PC-3 (cell line): ENCODE measurements at regions of chr1 and their contacts with region 1.

Region 1: DNA sequence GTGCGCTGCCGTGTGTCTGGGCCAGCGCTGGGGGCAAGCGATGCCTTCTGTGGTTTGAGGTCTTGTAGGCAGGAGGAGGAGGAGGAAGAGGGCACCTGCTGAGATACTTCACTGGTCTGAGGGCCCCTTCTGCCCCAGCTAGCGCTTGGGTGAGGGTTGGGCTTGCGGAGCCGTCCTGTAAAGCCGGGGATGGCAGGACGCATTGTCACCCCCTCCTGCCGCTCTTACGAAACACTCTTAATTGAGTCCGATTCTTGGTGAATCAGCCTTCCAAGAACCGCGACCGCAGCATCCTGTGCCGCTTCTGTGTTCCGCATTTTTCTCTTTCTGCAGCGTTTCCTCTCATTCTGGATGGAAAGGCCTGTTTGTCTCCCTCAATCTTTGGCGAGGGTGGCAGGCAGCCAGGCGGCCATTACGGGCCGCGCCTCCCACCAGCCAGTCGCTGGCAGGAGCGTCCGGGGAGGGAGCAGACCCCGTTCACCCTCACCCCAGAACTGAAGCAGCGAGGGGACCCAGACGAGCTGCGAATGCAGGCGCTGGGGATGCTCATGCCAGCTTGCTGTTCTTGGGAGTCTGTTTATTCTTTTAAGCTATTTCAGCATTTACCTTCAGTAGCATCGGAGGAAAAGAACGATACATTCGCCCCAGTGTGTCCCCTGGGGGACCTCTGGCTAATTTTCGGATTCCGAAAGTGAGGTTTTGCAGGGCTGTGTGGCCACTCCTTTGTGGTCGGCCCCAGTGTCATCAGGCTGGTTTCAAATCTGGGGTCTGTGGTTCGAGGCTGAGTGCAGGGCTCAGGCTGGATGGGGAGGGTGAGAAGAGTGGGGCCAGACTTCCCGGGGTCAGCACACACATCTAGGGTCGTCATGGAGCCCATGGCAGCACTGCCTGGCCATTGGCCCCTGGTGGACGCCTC is 62.7 kb downstream of the SKI start:
- DNase-seq: no peak
- ATAC-seq: no peak
- H3K4me3 ChIP-seq: no peak overlapping the region
- H3K27ac ChIP-seq: no peak overlapping the region
- H3K4me1 ChIP-seq: no peaks in the 10 kb centered on the region
- H3K27me3 ChIP-seq: no peaks in the 10 kb centered on the region
- CTCF ChIP-seq: no peak

Region 2: DNA sequence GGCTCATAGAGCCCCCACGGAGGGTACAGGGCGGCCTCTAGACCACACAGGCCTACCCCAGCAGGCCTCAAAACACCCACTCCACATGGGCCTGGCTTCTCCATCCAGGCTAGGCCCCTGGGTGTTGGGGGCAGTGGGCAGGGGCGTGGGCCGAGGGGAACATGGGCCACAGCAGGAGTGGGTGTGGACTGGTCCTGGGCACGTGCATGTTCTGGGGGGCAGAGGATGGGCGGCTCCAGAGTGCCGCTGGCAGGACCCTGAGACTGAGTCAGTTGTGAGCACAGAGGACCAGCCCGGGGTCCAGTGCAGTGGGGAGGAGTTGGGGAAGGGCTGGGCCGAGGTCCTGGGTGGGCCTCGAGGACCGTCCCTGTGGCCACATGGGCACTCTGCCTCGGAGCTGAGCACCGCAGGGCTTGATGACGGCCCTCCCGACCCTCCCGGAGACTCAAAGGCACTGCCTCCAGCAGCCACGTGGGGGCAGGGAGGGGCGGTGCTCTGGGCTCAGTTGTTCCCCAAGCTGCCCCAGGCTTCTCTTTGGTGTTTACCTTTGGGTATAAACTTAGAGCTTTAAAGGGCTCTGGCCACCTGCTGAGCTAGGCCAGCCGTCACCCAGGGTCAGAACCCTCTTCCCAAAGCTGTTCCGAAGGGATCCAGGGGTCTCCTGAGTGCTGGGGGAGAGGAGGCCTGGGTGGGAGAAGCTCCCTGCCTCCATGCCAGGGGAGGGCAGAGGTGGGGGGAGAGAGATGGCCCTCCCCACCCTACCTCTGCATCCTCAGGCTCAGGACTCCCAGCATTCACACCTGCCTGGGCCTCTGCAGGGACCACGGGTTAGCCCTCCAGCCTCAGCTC is 20.6 kb after region 1 on chr1:
- CTCF ChIA-PET with region 1: no interaction called
- POLR2A ChIA-PET with region 1: no interaction called
- intact Hi-C with region 1: no loop called
- DNase-seq: peak; percentile 64
- ATAC-seq: peak; percentile 50
- H3K4me3 ChIP-seq: no peak overlapping the region
- H3K27ac ChIP-seq: no peak overlapping the region
- H3K4me1 ChIP-seq: peaks cover 6% of the 10 kb centered on the region; the same call in 1 of the 2 replicates
- H3K27me3 ChIP-seq: no peaks in the 10 kb centered on the region
- CTCF ChIP-seq: peak; percentile 52

Region 3: DNA sequence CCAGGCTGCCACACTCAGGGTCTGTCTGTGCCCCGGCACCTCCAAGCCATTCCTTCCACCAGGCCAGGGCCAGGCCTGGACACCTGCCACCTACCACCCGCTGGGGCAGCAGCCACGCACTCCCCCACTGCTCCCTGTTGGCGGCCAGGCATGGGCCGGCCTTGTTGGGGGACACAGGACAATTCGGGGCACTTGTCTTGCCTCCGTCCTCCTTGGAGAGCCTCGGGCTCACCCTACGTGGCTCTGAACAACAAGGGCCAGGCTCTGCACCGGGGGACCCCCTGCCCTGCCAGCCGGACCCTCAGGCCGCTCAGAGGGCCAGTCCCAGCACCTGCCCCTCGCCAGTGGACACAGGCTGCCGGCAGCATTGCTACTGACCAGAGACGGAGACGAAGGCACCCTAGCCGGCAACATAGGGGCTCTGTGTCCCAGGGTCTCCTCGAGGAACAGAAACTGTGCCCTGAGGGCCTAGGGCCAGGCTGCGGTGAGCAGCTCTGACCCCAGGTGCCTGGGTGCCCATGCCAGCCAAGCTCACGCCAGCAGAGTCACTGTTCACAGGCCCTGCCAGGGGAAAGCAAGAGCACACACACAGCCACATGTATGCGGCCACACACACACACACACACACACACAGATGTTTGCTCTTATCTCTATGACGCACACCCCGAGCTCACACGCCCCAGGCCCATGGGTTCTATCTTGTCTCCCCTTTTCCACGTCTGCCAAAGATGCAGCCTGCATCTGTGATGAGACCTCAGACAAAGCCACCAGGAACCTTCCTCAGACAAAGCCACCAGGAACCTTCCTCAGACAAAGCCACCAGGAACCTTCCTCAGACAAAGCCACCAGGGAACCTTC is 54.6 kb after region 1 on chr1:
- CTCF ChIA-PET with region 1: no interaction called
- POLR2A ChIA-PET with region 1: no interaction called
- intact Hi-C with region 1: no loop called
- DNase-seq: no peak
- ATAC-seq: no peak
- H3K4me3 ChIP-seq: no peak overlapping the region
- H3K27ac ChIP-seq: no peak overlapping the region
- H3K4me1 ChIP-seq: no peaks in the 10 kb centered on the region
- H3K27me3 ChIP-seq: no peaks in the 10 kb centered on the region
- CTCF ChIP-seq: no peak

Region 4: GRCh38 chr1:2561898-2562545 is 271.2 kb after region 1 on chr1:
- CTCF ChIA-PET with region 1: interaction called, 13 read pairs
- POLR2A ChIA-PET with region 1: no interaction called
- intact Hi-C with region 1: no loop called
- DNase-seq: no peak
- ATAC-seq: no peak
- H3K4me3 ChIP-seq: no peak overlapping the region
- H3K27ac ChIP-seq: no peak overlapping the region
- H3K4me1 ChIP-seq: peaks cover 2% of the 10 kb centered on the region; the same call in 1 of the 2 replicates
- H3K27me3 ChIP-seq: 0 out of 2 replicates have a peak, but pooled peaks cover 6% of the 10 kb centered on the region
- CTCF ChIP-seq: peak; percentile 71